ENCODE measurements at regions of chr17 and their contacts with region 1.

Region 1: DNA sequence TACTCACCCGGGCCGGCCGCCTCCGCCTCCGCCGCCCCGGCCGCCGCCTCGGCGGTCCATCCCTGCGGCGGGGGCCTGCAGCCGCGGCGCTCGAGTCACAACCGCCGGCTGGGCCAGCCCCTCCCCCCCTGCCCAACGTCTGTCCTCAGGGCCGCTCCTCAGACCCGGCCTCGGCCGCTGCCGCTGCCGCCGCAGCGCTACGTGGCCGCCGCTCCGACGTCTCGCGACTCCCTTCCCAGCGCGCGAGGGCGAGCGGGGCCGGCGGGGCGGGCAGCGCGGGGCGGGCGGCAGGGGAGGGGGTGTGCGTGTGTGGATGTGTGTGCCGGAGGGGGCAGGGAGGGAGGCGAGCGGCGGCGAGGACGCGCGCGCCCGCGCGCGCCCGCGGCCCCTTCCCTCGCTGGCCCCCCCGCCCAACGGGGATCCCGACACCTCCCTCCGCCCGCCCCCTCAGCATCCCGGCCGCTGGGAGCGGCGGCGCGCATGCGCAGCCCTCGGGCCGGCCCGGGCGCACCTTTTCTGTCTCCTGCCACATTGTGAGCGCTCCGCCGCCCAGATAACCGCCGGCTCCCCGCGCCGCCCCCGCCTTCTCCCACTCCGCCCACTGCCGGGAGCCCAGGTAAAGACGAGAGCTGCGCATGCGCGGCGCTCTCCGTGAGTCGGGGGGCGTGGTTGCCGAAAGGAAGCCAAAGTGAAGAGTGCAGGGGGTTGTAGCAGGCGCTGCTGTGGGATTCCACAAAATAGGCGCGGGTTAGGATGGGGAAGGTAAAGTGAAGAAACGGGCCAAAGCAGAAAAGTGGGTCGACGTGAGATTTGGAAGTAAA is at the start of gene ZNF652:
- DNase-seq: peak; percentile 100
- H3K4me3 ChIP-seq: peak within 1 kb of the TSS; percentile 64
- H3K4me3 Mint-ChIP-seq: peak within 1 kb of the TSS; percentile 77
- H3K27ac Mint-ChIP-seq: peak within 1 kb of the TSS; percentile 76
- H3K4me1 ChIP-seq: peaks cover 26% of the 10 kb centered on the region
- H3K4me1 Mint-ChIP-seq: peaks cover 27% of the 10 kb centered on the region
- H3K27me3 ChIP-seq: no peaks in the 10 kb centered on the region
- H3K27me3 Mint-ChIP-seq: no peaks in the 10 kb centered on the region
- CTCF ChIP-seq: no peak
- total RNA-seq, gene ZNF652: 89.3 and 92.6 TPM in 2 replicates

Region 2: GRCh38 chr17:49249292-49249794 is 112.8 kb before region 1 on chr17:
- CTCF ChIA-PET with region 1: interaction called, 4 read pairs
- POLR2A ChIA-PET with region 1: interaction called, 19 read pairs
- intact Hi-C with region 1: no loop called
- DNase-seq: no peak
- H3K4me3 ChIP-seq: no peak overlapping the region
- H3K4me3 Mint-ChIP-seq: no peak overlapping the region
- H3K27ac Mint-ChIP-seq: no peak overlapping the region
- H3K4me1 ChIP-seq: no peaks in the 10 kb centered on the region
- H3K4me1 Mint-ChIP-seq: no peaks in the 10 kb centered on the region
- H3K27me3 ChIP-seq: no peaks in the 10 kb centered on the region
- H3K27me3 Mint-ChIP-seq: no peaks in the 10 kb centered on the region
- CTCF ChIP-seq: no peak

Region 3: DNA sequence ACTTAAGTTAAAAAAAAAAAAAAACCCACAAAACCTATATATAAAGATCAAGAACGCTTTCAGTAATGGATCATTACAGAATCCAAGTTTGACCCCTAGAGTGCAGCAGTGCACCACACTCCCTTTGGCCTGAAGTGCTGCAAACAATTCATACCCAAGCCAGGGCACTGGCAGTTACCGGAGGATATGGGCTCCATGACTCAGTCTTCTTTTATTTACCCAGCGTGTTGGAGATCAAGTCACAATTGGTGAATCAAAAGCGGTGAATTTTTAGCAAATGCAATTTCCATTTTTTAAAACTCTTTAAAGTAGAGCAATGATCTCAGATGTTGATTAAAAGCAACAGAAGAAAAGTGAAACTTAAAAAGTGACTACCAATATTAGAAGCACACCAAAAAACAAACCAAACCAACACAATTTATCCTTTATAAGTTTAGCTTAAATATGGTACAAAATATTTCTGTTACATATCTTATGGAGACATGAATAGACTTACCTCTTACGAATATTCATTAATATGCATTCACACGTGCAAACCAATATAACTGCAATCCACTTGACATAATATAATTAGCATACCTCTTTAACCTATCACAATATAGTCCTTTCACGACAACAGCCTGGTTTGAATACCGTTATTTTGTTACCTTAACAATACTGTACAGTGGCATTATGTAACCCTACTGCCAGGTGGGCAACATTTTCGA is 46.4 kb before region 1 on chr17:
- CTCF ChIA-PET with region 1: interaction called, 7 read pairs
- POLR2A ChIA-PET with region 1: no interaction called
- intact Hi-C with region 1: loop called (anchors 1 kb)
- DNase-seq: peak; percentile 82 to 87
- H3K4me3 ChIP-seq: no peak overlapping the region
- H3K4me3 Mint-ChIP-seq: no peak overlapping the region
- H3K27ac Mint-ChIP-seq: no peak overlapping the region
- H3K4me1 ChIP-seq: no peaks in the 10 kb centered on the region; the same call in 1 of the 2 replicates
- H3K4me1 Mint-ChIP-seq: no peaks in the 10 kb centered on the region
- H3K27me3 ChIP-seq: no peaks in the 10 kb centered on the region
- H3K27me3 Mint-ChIP-seq: no peaks in the 10 kb centered on the region
- CTCF ChIP-seq: peak; percentile 97 to 99

Region 4: DNA sequence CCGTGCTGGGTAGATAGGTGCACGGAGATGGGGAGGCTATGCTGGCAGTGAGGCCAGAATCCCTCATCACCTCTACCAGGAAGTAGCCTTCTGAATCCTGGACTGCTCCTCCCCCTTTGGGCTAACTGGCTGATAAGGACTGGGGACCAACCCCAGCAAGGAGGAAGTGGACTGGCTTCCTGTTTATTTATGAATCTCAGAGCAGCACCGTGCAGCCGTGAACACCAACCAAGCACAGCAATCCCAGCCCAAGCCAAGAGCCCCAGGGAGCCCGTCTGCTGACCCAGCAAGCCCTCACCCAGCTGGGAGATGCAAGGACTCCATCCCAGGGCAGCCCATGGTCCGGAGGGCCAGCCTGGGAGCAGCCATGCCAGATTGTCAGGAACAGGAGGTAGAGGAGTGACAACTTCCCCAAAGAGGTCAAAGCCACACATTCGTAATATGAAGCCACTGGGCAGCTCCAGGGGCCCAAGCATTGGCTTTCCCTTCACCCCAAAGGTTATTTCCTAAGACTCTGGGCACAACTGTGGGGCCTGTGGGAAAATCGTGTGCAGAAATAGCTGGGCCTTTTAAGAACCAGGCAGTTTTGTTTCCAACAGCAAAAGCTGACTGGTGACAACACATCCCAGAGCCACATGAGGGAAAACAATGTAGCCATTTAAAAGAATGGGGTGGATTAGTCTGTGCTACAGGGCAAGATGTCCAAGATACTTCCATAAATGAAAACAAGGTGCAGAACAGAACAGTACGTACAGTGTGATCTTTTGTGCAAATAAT is 28.6 kb after region 1 on chr17:
- CTCF ChIA-PET with region 1: interaction called, 7 read pairs
- POLR2A ChIA-PET with region 1: no interaction called
- intact Hi-C with region 1: loop called (anchors 1 kb)
- DNase-seq: no peak
- H3K4me3 ChIP-seq: no peak overlapping the region
- H3K4me3 Mint-ChIP-seq: no peak overlapping the region
- H3K27ac Mint-ChIP-seq: no peak overlapping the region
- H3K4me1 ChIP-seq: peaks cover 9% of the 10 kb centered on the region; the same call in 1 of the 2 replicates
- H3K4me1 Mint-ChIP-seq: no peaks in the 10 kb centered on the region
- H3K27me3 ChIP-seq: no peaks in the 10 kb centered on the region
- H3K27me3 Mint-ChIP-seq: no peaks in the 10 kb centered on the region
- CTCF ChIP-seq: no peak

Region 5: GRCh38 chr17:49414622-49415350 is 52.7 kb after region 1 on chr17 and contains the start of gene PHB1:
- CTCF ChIA-PET with region 1: no interaction called
- POLR2A ChIA-PET with region 1: interaction called, 10 read pairs
- intact Hi-C with region 1: loop called (anchors 1 kb)
- DNase-seq: peak; percentile 100
- H3K4me3 ChIP-seq: peak within 1 kb of the TSS; percentile 61
- H3K4me3 Mint-ChIP-seq: peak within 1 kb of the TSS; percentile 88
- H3K27ac Mint-ChIP-seq: peak within 1 kb of the TSS; percentile 84
- H3K4me1 ChIP-seq: peaks cover 4% of the 10 kb centered on the region
- H3K4me1 Mint-ChIP-seq: no peaks in the 10 kb centered on the region
- H3K27me3 ChIP-seq: no peaks in the 10 kb centered on the region
- H3K27me3 Mint-ChIP-seq: no peaks in the 10 kb centered on the region
- CTCF ChIP-seq: no peak
- total RNA-seq, gene PHB1: 761 and 848 TPM in 2 replicates